Aorta (tissue), 5 donors: ENCODE measurements at regions of chr1 and their contacts with region 1.

Region 1: GRCh38 chr1:89987170-89987819 is 7.6 kb upstream of the ZNF326 start:
- DNase-seq: no peak
- ATAC-seq: peak; percentile 87
- H3K4me3 ChIP-seq: no peak overlapping the region
- H3K27ac ChIP-seq: no peak overlapping the region
- H3K4me1 ChIP-seq: no peaks in the 10 kb centered on the region
- H3K27me3 ChIP-seq: no peaks in the 10 kb centered on the region

Region 2: DNA sequence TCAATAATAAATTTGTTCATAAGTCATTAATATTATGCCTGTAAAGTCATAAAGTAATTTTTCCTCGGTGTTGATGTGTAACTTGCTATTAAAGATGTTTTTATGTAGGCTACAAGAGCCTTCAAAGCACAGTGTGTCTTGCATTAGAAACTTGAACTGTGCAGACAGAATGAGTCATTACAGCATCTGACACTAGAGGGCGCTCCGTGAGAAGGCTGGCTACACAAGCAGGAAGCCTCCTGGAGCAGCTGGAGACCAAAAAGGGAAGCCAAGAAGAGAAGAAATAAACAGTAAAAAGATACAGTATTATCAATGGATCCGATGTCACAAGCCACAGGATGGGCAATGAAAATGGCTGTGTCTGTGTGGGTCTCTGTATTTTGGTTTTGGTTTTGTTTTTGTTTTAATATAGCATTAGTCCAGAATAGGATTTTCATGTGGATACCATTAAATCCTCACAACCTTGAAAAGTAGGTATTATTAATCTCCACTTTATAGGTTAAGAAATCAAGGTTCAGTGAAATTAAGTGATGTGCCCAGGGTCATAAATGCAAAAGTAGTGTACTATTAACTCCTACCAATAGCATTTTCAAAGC is 182.6 kb before region 1 on chr1:
- intact Hi-C with region 1: loop called (anchors 1 kb)
- DNase-seq: peak; percentile 87 to 91
- ATAC-seq: peak; percentile 82
- H3K4me3 ChIP-seq: no peak overlapping the region
- H3K27ac ChIP-seq: no peak overlapping the region
- H3K4me1 ChIP-seq: no peaks in the 10 kb centered on the region
- H3K27me3 ChIP-seq: peaks cover 0 to 3% of the 10 kb centered on the region in 2 donors

Region 3: GRCh38 chr1:89843281-89844121 is 143.8 kb before region 1 on chr1:
- intact Hi-C with region 1: loop called in 1 of 2 experiments (anchors 5 kb)
- DNase-seq: peak; percentile 75 to 88
- ATAC-seq: peak; percentile 94
- H3K4me3 ChIP-seq: peak overlapping the region; percentile 57 to 79
- H3K27ac ChIP-seq: peak overlapping the region in 1 of 2 donors; percentile 3
- H3K4me1 ChIP-seq: no peaks in the 10 kb centered on the region
- H3K27me3 ChIP-seq: no peaks in the 10 kb centered on the region